Pancreas (tissue), 10 donors: ENCODE measurements at regions of chr15 and their contacts with region 1.

Region 1: GRCh38 chr15:75327005-75327404 is 8.9 kb upstream of the COMMD4 start:
- DNase-seq: no peak
- ATAC-seq: no peak
- H3K4me3 ChIP-seq: no peak overlapping the region
- H3K27ac ChIP-seq: no peak overlapping the region
- H3K4me1 ChIP-seq: no peaks in the 10 kb centered on the region
- H3K27me3 ChIP-seq: no peaks in the 10 kb centered on the region
- CTCF ChIP-seq: no peak

Region 2: GRCh38 chr15:75229191-75230015 is 97.6 kb before region 1 on chr15:
- intact Hi-C with region 1: loop called in 1 of 3 experiments (anchors 10 kb)
- DNase-seq: peak in 3 of 6 donors; percentile 11 to 45 (median 38)
- ATAC-seq: no peak
- H3K4me3 ChIP-seq: no peak overlapping the region
- H3K27ac ChIP-seq: no peak overlapping the region
- H3K4me1 ChIP-seq: no peaks in the 10 kb centered on the region
- H3K27me3 ChIP-seq: no peaks in the 10 kb centered on the region
- CTCF ChIP-seq: no peak

Region 3: GRCh38 chr15:75380773-75381172 is 53.8 kb after region 1 on chr15:
- intact Hi-C with region 1: no loop called
- DNase-seq: no peak
- ATAC-seq: no peak
- H3K4me3 ChIP-seq: no peak overlapping the region
- H3K27ac ChIP-seq: no peak overlapping the region
- H3K4me1 ChIP-seq: no peaks in the 10 kb centered on the region
- H3K27me3 ChIP-seq: no peaks in the 10 kb centered on the region
- CTCF ChIP-seq: no peak